WTC11 (cell line): ENCODE measurements at regions of chr14 and their contacts with region 1.

Region 1: GRCh38 chr14:91354979-91355685 is 62.5 kb downstream of the CCDC88C start:
- DNase-seq: peak; percentile 83
- ATAC-seq: peak; percentile 91
- H3K4me3 Mint-ChIP-seq: no peak overlapping the region
- H3K27ac Mint-ChIP-seq: peak overlapping the region; percentile 47
- H3K4me1 Mint-ChIP-seq: peaks cover 43% of the 10 kb centered on the region
- H3K27me3 Mint-ChIP-seq: no peaks in the 10 kb centered on the region
- CTCF ChIP-seq: peak; percentile 76

Region 2: DNA sequence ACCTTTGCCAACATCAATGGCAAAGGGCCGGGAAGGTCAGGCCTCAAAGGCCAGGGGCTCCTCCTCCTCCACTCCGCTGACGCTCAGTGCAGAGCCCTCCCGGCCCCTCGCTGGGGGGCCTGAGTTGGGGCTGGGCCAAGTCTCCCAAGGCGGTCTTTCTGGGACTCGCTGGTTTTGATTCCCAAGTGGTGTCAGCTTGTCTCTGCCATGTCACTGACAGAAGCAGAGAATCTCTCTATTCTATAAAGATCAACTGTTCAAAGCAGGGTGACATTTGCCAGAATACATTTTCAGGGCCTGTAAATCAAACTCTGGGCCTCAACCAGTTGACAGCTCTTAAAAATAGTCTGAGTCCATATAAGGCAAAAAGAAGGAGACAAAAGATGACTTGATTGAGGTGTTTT is 13.4 kb before region 1 on chr14:
- CTCF ChIA-PET with region 1: interaction called, 10 read pairs
- POLR2A ChIA-PET with region 1: no interaction called
- DNase-seq: no peak
- ATAC-seq: no peak
- H3K4me3 Mint-ChIP-seq: no peak overlapping the region
- H3K27ac Mint-ChIP-seq: no peak overlapping the region
- H3K4me1 Mint-ChIP-seq: peaks cover 5% of the 10 kb centered on the region; the same call in 1 of the 2 replicates
- H3K27me3 Mint-ChIP-seq: no peaks in the 10 kb centered on the region
- CTCF ChIP-seq: no peak

Region 3: DNA sequence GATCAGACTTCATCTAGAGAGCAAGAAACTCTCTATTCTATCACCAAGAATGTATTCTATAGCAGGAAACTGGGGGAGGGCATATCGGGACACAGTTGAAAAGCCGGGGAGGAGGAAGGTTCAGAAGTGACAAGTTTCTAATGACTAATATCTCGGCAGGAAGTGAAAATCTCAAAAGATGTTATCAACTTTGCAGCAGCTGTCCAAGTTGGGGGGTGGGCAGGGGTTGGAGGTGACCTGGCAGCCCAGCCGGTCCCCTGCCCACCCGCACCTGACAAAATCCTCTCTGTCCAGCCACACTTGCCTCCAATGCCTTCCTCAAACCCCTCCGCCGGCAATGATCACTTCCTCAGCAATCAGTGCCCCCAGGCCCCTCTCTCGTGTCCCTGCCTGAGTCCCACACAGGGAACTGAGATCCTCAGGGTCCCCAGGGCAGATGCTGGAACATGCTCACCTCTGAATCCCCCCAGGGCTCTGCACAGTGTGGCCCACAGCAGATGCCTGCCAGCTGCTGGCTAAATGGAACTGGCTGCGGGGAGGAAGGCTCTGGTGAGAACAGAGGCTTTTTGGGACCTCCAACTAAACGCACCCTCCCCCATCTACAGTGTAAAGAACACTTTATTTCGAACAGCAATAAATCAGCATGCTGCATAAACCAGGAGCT is 18.6 kb after region 1 on chr14:
- CTCF ChIA-PET with region 1: interaction called, 44 read pairs
- POLR2A ChIA-PET with region 1: no interaction called
- DNase-seq: no peak
- ATAC-seq: no peak
- H3K4me3 Mint-ChIP-seq: no peak overlapping the region
- H3K27ac Mint-ChIP-seq: peak overlapping the region; percentile 71
- H3K4me1 Mint-ChIP-seq: peaks cover 87% of the 10 kb centered on the region
- H3K27me3 Mint-ChIP-seq: no peaks in the 10 kb centered on the region
- CTCF ChIP-seq: no peak

Region 4: GRCh38 chr14:91418387-91419043 is 63.4 kb after region 1 on chr14:
- CTCF ChIA-PET with region 1: interaction called, 97 read pairs
- POLR2A ChIA-PET with region 1: interaction called, 3 read pairs
- DNase-seq: peak; percentile 83
- ATAC-seq: peak; percentile 23
- H3K4me3 Mint-ChIP-seq: peak overlapping the region; percentile 53
- H3K27ac Mint-ChIP-seq: no peak overlapping the region
- H3K4me1 Mint-ChIP-seq: peaks cover 35% of the 10 kb centered on the region
- H3K27me3 Mint-ChIP-seq: no peaks in the 10 kb centered on the region; the same call in 1 of the 2 replicates
- CTCF ChIP-seq: peak; percentile 98